ENCODE measurements at regions of chr6 and their contacts with region 1.

Region 1: GRCh38 chr6:113920663-113921267 is 50.2 kb downstream of the HDAC2 start:
- DNase-seq: no peak
- H3K4me3 ChIP-seq: no peak overlapping the region
- H3K4me3 Mint-ChIP-seq: peak overlapping the region in 2 of 7 donors; percentile 5 to 6
- H3K27ac ChIP-seq: no peak overlapping the region
- H3K27ac Mint-ChIP-seq: peak overlapping the region in 4 of 8 donors; percentile 23 to 76 (median 46)
- H3K4me1 ChIP-seq: no peaks in the 10 kb centered on the region
- H3K4me1 Mint-ChIP-seq: peaks cover 12 to 17% (median 15%) of the 10 kb centered on the region in 3 donors
- H3K27me3 ChIP-seq: no peaks in the 10 kb centered on the region
- H3K27me3 Mint-ChIP-seq: peaks cover 0 to 3% of the 10 kb centered on the region in 2 donors

Region 2: GRCh38 chr6:113909234-113909856 is 11.4 kb before region 1 on chr6:
- CTCF ChIA-PET with region 1: interaction called, 23 read pairs
- POLR2A ChIA-PET with region 1: no interaction called
- DNase-seq: peak in 2 of 5 donors; percentile 31 to 33
- H3K4me3 ChIP-seq: no peak overlapping the region
- H3K4me3 Mint-ChIP-seq: no peak overlapping the region
- H3K27ac ChIP-seq: no peak overlapping the region
- H3K27ac Mint-ChIP-seq: no peak overlapping the region
- H3K4me1 ChIP-seq: no peaks in the 10 kb centered on the region
- H3K4me1 Mint-ChIP-seq: peaks cover 2 to 8% (median 3%) of the 10 kb centered on the region in 3 donors
- H3K27me3 ChIP-seq: no peaks in the 10 kb centered on the region
- H3K27me3 Mint-ChIP-seq: peaks cover 3 to 4% of the 10 kb centered on the region in 2 donors

Region 3: GRCh38 chr6:113989675-113990074 is 68.9 kb after region 1 on chr6:
- CTCF ChIA-PET with region 1: no interaction called
- POLR2A ChIA-PET with region 1: no interaction called
- DNase-seq: no peak
- H3K4me3 ChIP-seq: no peak overlapping the region
- H3K4me3 Mint-ChIP-seq: no peak overlapping the region
- H3K27ac ChIP-seq: no peak overlapping the region
- H3K27ac Mint-ChIP-seq: no peak overlapping the region
- H3K4me1 ChIP-seq: no peaks in the 10 kb centered on the region
- H3K4me1 Mint-ChIP-seq: no peaks in the 10 kb centered on the region
- H3K27me3 ChIP-seq: no peaks in the 10 kb centered on the region
- H3K27me3 Mint-ChIP-seq: peaks cover 6 to 44% of the 10 kb centered on the region in 2 donors

Measured in CD8-positive, alpha-beta memory T cell (primary cell).